ENCODE measurements at regions of chrX and their contacts with region 1.

Region 1: GRCh38 chrX:95318882-95319281 is 1365.8 kb upstream of the DIAPH2 start:
- DNase-seq: peak; percentile 22
- ATAC-seq: peak; percentile 94
- H3K4me3 Mint-ChIP-seq: no peak overlapping the region
- H3K27ac Mint-ChIP-seq: no peak overlapping the region
- H3K4me1 Mint-ChIP-seq: no peaks in the 10 kb centered on the region
- H3K27me3 Mint-ChIP-seq: no peaks in the 10 kb centered on the region
- CTCF ChIP-seq: no peak

Region 2: DNA sequence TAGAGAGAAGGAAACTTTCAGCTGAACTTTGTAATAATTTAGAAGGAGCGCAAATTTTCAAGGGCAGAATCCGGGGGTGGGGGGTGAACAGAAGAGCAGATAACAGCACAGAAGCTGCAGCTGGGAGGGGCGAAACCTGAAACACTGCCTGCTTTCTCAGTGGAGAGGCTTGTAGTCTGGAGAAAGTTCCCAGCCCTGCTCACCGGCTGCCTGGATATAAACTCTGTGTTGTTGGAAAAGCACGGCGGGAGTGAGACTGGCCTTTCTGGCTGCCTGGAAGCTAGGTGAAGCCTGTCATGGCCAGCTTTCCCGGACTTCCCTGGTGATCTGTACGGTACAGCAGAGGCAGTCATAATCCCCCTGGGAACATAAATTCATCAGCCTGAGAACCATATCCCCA is 13.6 kb after region 1 on chrX:
- CTCF ChIA-PET with region 1: interaction called, 10 read pairs
- POLR2A ChIA-PET with region 1: no interaction called
- DNase-seq: no peak
- ATAC-seq: peak; percentile 39
- H3K4me3 Mint-ChIP-seq: no peak overlapping the region
- H3K27ac Mint-ChIP-seq: no peak overlapping the region
- H3K4me1 Mint-ChIP-seq: peaks cover 17% of the 10 kb centered on the region
- H3K27me3 Mint-ChIP-seq: no peaks in the 10 kb centered on the region
- CTCF ChIP-seq: no peak

Region 3: DNA sequence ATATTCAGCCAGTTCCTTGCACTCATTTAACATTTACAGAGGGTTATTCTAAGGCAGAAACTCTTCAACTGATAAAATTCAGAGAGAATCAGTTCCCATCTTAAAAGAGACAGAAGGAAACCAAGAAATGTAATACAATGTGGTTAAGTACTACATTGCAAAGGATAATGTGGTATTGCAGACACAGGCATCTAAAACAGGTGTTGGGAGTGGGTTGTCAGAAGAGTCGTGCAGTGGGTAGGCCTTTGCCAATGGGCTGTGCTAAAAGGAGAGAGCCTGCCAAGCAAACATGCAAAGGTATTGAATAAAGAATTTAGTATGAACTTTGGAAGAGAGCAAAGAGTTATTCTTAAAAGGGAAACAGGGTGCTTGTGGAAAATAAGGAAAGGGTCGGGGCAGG is 321.3 kb after region 1 on chrX:
- CTCF ChIA-PET with region 1: no interaction called
- POLR2A ChIA-PET with region 1: no interaction called
- DNase-seq: no peak
- ATAC-seq: no peak
- H3K4me3 Mint-ChIP-seq: no peak overlapping the region
- H3K27ac Mint-ChIP-seq: no peak overlapping the region
- H3K4me1 Mint-ChIP-seq: no peaks in the 10 kb centered on the region
- H3K27me3 Mint-ChIP-seq: peaks cover 19% of the 10 kb centered on the region
- CTCF ChIP-seq: no peak

Measured in WTC11 (cell line).